PC-3 (cell line): ENCODE measurements at regions of chr1 and their contacts with region 1.

Region 1: GRCh38 chr1:235468970-235469369 is 35.3 kb downstream of the B3GALNT2 start:
- DNase-seq: peak; percentile 79
- ATAC-seq: peak; percentile 98
- H3K4me3 ChIP-seq: 0 out of 2 replicates have a peak overlapping the region, but pooled peaks have one; percentile 21
- H3K27ac ChIP-seq: peak overlapping the region; percentile 21
- H3K4me1 ChIP-seq: peaks cover 9% of the 10 kb centered on the region
- H3K27me3 ChIP-seq: no peaks in the 10 kb centered on the region
- CTCF ChIP-seq: peak; percentile 17; the same call in 1 of the 2 replicates

Region 2: DNA sequence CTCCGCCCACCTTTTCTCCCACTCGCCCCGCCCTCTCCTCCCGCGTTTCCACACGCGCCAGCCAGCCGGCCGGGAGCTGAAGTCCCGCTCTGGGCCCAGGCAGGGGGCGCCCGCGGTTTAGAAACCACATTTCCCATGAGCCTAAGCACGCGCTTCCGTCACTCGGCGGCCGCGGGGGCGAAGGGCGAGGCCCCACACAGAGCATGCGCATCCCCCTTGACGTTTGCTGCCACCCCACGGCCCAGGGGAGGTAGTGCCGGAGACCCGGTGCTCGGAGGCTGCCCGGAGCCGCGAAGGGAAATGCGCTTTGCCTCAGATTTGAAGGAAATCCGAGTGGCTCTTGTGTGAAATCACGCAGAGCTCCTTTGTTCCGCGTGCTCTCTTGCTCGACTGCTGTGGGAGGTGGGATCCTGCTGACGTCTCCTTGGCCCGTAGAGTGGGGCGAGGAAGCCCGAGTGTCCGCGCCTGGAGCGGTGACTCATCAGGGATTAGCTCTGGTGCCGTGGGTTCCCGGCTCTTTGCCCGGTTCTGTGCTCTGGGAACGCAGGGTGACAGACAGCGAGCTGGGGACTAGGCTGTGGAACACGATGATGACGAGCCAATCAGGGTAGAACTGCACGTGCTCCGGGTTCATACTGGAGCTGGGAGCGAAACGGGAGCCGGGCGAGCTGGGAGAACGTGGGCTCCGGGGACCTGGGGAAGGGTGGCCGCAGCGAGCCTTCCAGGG is 35.7 kb after region 1 on chr1:
- CTCF ChIA-PET with region 1: interaction called, 5 read pairs
- POLR2A ChIA-PET with region 1: no interaction called
- intact Hi-C with region 1: loop called (anchors 5 kb)
- DNase-seq: peak; percentile 95
- ATAC-seq: peak; percentile 75
- H3K4me3 ChIP-seq: peak overlapping the region; percentile 98
- H3K27ac ChIP-seq: peak overlapping the region; percentile 98
- H3K4me1 ChIP-seq: peaks cover 20% of the 10 kb centered on the region
- H3K27me3 ChIP-seq: no peaks in the 10 kb centered on the region
- CTCF ChIP-seq: peak; percentile 64